Activated CD4-positive, alpha-beta memory T cell treated with anti-CD3 and anti-CD28 coated beads for 36 hours (primary cell): ENCODE measurements at regions of chr15 and their contacts with region 1.

Region 1: DNA sequence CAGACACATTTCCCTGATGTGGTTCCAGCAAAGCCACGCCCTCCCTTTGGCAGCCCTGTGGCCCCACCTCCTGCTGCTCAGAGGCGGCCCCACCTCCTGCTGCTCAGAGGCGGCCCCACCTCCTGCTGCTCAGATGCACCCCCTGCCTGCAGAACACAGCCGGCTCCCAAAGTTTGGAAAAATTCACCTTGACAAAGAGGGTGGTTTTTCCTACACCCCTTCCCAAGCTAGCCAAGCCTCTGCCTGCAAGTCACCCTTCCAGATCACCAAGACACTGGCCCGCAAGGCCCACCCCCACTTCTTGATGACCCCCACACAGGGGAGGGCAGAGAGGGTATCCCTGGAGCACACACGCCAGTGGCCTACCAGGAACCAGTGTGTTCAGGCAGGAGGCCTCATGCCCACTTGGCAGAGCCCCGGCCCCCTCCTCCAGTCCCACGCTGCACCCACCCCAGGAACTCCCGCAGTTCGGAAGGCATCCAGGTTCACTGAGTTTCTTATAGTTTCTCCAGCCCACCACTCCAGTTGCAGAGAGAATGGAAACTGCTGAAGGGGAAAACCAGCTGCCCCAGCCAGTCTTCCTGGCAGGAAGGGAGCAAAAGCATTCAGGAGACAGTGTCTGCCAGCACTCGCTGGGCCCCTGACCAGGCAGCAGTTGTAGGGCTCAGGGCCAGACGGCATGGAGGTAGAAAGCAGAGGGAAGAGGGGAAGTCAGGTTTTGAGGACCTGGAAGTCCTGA is 2.3 kb upstream of the HAPLN3 start:
- DNase-seq: peak; percentile 78
- H3K4me3 Mint-ChIP-seq: no peak overlapping the region
- H3K27ac Mint-ChIP-seq: no peak overlapping the region
- H3K4me1 Mint-ChIP-seq: peaks cover 41% of the 10 kb centered on the region
- H3K27me3 Mint-ChIP-seq: no peaks in the 10 kb centered on the region

Region 2: GRCh38 chr15:88546248-88547129 is 351.1 kb before region 1 on chr15 and contains the start of gene DET1:
- CTCF ChIA-PET with region 1: no interaction called
- POLR2A ChIA-PET with region 1: no interaction called
- intact Hi-C with region 1: loop called (anchors 1 kb)
- DNase-seq: peak; percentile 98
- H3K4me3 Mint-ChIP-seq: peak within 1 kb of the TSS; percentile 88
- H3K27ac Mint-ChIP-seq: peak within 1 kb of the TSS; percentile 89
- H3K4me1 Mint-ChIP-seq: peaks cover 13% of the 10 kb centered on the region
- H3K27me3 Mint-ChIP-seq: no peaks in the 10 kb centered on the region
- total RNA-seq, gene DET1: 1.9 to 2.2 TPM

Region 3: GRCh38 chr15:88810434-88810995 is 87.1 kb before region 1 on chr15:
- CTCF ChIA-PET with region 1: no interaction called
- POLR2A ChIA-PET with region 1: no interaction called
- intact Hi-C with region 1: no loop called
- DNase-seq: no peak
- H3K4me3 Mint-ChIP-seq: no peak overlapping the region
- H3K27ac Mint-ChIP-seq: no peak overlapping the region
- H3K4me1 Mint-ChIP-seq: no peaks in the 10 kb centered on the region
- H3K27me3 Mint-ChIP-seq: peaks cover 25% of the 10 kb centered on the region

Region 4: GRCh38 chr15:89017370-89018066 is 119.9 kb after region 1 on chr15:
- CTCF ChIA-PET with region 1: interaction called, 97 read pairs
- POLR2A ChIA-PET with region 1: no interaction called
- intact Hi-C with region 1: loop called (anchors 1 kb)
- DNase-seq: peak; percentile 90
- H3K4me3 Mint-ChIP-seq: peak overlapping the region; percentile 43
- H3K27ac Mint-ChIP-seq: no peak overlapping the region
- H3K4me1 Mint-ChIP-seq: peaks cover 15% of the 10 kb centered on the region
- H3K27me3 Mint-ChIP-seq: peaks cover 2% of the 10 kb centered on the region

Region 5: GRCh38 chr15:89243691-89244471 is 346.3 kb after region 1 on chr15 and contains the start of gene FANCI:
- CTCF ChIA-PET with region 1: no interaction called
- POLR2A ChIA-PET with region 1: no interaction called
- intact Hi-C with region 1: loop called (anchors 10 kb)
- DNase-seq: peak; percentile 98
- H3K4me3 Mint-ChIP-seq: peak within 1 kb of the TSS; percentile 96
- H3K27ac Mint-ChIP-seq: peak within 1 kb of the TSS; percentile 90
- H3K4me1 Mint-ChIP-seq: peaks cover 27% of the 10 kb centered on the region
- H3K27me3 Mint-ChIP-seq: no peaks in the 10 kb centered on the region
- total RNA-seq, gene FANCI: 208 to 213 TPM